ENCODE measurements at regions of chr15 and their contacts with region 1.

Region 1: DNA sequence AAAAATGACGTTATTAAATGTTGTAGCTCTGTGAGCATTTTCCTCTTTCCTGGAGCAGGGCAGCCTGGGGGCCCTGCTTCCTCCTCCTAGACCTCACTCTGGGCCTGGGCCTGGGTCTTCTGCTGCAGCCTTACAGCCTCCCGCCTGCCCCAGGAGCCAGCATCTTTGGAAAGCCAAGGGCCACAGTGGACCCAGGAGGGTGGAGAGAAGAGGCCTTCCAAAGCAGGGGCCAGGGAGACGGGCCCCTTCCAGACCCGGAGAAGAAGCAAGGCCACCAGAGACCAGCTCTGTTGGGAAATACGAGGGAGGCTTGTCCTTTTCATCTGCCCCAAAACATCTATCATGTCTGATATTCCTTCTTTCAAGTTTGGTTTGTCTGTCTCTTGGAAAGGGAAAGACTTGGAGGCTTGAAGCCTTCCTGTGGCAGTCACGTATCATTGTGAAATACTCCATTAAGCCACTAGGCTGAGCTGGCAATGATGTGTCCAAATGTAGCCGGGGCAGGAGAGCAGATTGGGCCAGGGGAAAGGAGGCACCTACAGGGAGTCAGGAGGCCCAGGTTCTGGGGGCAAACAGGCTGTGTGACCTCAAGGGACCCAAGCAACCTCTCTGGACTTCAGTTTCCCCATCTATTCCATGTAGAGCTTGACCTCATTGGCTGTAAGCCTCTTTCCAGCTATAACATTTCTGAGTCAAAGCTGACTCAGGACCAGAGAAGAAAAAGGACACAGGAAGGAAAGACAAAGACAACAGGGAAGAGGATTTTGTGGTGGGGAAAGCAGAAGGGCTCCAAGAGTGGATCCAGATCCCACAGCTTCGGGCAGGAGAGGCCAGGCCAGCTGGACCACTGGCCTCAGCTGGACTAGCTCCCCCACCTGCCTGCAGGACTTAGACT is 31.1 kb downstream of the CYP11A1 start:
- DNase-seq: no peak
- H3K4me3 ChIP-seq: no peak overlapping the region
- H3K27ac ChIP-seq: no peak overlapping the region
- H3K4me1 ChIP-seq: no peaks in the 10 kb centered on the region
- H3K27me3 ChIP-seq: no peaks in the 10 kb centered on the region
- CTCF ChIP-seq: no peak
- POLR2A ChIP-seq: no peak

Region 2: GRCh38 chr15:76163475-76163881 is 1827.1 kb after region 1 on chr15:
- intact Hi-C with region 1: loop called (anchors 10 kb)
- DNase-seq: no peak
- H3K4me3 ChIP-seq: no peak overlapping the region
- H3K27ac ChIP-seq: no peak overlapping the region
- H3K4me1 ChIP-seq: peaks cover 0 to 4% of the 10 kb centered on the region in 2 donors
- H3K27me3 ChIP-seq: no peaks in the 10 kb centered on the region
- CTCF ChIP-seq: no peak
- POLR2A ChIP-seq: no peak

Measured in breast epithelium (tissue), 4 donors.